Ascending aorta (tissue), 2 donors: ENCODE measurements at regions of chr16 and their contacts with region 1.

Region 1: DNA sequence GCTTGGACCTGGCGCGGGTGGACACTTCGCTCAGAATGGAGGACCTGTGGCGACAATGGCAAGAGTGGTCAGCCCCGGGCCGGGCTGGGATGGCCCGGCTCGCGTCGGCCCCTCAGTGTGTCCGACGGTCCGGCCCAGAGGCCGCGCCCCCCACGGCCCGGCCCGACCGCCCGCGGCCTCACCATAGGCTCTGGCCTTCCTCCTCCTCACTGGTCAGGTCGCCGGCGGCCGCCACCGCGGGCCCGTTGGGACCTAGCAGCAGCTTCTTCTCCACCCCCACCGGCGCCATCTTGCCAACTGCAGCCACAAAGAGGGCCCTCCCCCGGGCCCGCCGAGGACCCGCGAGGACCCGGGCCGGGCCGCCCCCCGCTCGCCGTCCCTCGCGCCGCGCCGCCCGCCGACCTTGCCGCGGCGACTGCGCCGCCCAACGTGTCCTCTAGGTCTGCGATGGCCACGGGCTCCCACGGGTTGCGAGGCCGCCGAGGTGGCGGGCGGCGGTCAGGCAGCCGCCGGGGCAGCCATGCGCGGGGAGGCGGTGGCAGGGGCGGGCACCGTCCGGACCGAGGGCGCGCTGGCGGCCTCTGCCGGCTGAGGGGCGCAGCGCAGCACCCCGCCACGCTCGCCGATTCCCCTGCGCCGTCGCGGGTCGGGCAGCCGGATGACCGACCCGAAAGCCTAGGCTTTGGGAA is at the start of gene DYNC1LI2:
- DNase-seq: peak in 1 of 2 donors; percentile 88
- H3K4me3 ChIP-seq: peak within 1 kb of the TSS; percentile 82 to 87
- H3K27ac ChIP-seq: peak within 1 kb of the TSS; percentile 82 to 83
- H3K4me1 ChIP-seq: peaks cover 6 to 22% of the 10 kb centered on the region in 2 donors
- H3K27me3 ChIP-seq: no peaks in the 10 kb centered on the region
- CTCF ChIP-seq: peak; percentile 62 to 97 (median 65)
- total RNA-seq, gene DYNC1LI2: 99.7 TPM

Region 2: DNA sequence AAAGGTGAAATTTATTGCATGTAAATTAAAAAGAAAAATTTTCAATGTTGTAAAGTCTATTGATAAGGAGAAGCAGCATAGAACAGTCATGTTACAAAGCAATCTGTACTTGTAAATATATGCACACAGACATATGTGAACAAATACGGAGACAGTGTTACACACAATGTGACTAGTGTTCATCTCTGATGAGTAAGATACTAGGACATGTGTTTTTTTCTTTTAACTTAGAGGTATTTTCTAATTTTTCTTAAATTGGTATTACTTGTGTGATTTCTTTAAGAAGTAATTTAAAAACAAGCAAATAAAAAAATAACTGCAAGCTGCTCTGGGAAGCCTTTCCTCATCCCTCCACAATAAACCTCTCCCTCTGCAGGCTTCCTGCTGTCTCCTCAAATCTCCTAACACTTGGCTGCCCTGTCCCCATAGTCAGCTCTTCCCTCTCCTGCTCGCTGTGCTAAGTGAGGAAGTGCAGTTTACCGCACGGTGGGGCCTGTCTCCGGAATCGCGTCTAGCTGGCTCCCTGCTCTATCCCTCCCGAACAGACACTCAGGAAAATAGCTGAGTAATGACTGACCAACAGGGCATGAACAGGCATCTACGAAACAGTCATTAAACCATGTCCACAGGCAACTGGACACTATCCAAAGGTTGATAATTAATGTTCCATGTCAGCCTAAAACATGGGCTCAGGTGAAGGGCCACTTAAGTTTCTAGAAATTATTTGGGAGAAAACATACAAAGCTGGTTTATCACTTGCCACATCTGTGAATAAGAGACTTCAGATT is 90.8 kb before region 1 on chr16:
- intact Hi-C with region 1: loop called (anchors 5 kb)
- DNase-seq: peak in 1 of 2 donors; percentile 68
- H3K4me3 ChIP-seq: no peak overlapping the region
- H3K27ac ChIP-seq: peak overlapping the region; percentile 38 to 57
- H3K4me1 ChIP-seq: peaks cover 0 to 3% of the 10 kb centered on the region in 2 donors
- H3K27me3 ChIP-seq: no peaks in the 10 kb centered on the region
- CTCF ChIP-seq: peak in 2 of 3 experiments; percentile 6 to 23

Region 3: DNA sequence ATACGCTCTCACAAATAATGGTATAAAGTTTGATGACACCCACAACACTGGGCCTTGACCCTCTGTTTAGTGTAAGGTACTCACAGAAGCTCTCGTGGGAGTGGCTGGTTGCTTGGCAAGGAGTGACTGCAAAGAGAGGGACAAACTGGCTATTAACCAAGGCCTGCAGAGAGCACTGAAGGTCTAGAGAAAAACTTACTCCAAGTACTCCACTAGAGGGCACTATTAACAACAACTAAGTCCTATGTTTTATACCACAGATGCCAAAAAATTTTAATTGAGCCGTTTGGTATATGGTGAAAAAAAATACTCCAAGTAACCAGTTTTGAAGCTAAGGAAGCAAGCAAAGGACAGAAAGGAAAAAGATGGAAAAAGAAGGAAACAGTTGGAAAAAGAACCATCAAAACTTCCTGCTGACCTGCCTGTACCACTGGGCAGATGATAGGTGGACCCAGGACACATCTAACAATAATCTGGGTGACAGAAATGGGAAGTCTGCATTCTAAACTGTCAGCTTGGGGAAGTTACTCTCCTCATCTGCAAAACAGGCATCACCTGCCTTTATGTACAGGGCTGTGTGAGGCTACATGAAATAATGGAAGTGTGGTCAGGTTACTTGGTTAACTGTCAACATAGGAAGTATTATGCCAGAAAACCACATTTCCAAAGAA is 23.2 kb before region 1 on chr16:
- intact Hi-C with region 1: loop called (anchors 1 kb)
- DNase-seq: no peak
- H3K4me3 ChIP-seq: no peak overlapping the region
- H3K27ac ChIP-seq: no peak overlapping the region
- H3K4me1 ChIP-seq: no peaks in the 10 kb centered on the region
- H3K27me3 ChIP-seq: no peaks in the 10 kb centered on the region
- CTCF ChIP-seq: peak; percentile 44 to 66 (median 46)